ENCODE measurements at regions of chr19 and their contacts with region 1.

Region 1: GRCh38 chr19:53879140-53880081 is 2.6 kb upstream of the PRKCG start:
- DNase-seq: peak; percentile 96

Region 2: DNA sequence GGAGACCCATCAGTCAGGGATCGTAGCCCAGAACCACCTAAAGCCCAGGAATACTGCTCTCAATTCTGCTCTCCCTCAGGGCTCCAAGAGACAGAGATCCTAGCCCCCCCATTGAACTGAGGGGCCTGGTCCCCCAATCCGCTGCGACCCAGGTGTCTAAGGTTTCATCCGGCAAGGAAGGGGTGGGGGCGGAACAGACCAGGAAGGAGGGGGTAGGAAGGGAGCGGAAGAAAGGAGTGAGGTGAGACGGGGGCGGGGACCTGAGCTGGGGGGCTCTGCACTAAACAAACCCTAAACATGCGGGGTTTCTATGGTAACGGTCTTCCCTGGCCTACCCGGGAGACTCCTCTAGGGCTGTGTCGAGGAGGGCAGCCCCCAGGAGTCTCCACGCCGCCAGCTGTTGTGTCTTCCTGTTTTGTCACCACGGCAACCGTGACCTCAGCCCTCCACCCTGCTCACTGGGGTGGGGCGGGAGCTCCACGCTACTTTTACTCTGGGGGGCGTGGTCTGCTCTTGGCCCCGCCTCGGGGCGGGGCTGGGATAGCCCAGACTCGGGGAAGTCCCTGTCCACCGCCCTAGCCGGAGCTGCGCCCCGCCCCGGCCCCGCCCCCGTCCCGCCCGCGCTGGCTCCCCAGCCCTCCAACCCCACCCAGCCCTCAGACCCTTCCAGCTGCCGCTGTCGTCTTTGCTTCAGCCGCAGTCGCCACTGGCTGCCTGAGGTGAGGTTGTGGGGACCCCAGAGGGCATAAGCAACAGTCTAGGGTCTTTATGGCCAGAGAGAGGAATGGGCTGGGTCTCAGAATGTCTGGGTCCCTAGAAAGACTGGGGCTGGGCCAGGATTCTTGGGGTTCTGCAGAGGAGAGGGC is 12.0 kb before region 1 on chr19 and contains the start of gene MYADM:
- CTCF ChIA-PET with region 1: no interaction called
- POLR2A ChIA-PET with region 1: interaction called, 39 read pairs
- DNase-seq: peak; percentile 99

Region 3: DNA sequence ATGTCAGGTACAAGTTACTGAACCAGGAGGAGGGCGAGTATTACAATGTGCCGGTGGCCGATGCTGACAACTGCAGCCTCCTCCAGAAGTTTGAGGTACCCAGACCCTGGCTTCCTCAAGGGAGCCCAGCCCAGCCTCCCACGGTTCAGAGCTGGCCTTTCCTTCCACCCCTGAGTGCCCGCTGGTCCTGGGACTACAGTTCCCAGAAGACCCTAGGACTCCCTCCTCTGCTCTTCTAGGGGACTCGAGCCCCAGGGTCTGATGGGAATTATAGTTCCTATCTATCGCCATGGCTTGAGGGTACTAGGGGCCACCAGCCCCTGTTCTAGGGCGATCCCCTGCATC is 13.5 kb after region 1 on chr19:
- CTCF ChIA-PET with region 1: no interaction called
- POLR2A ChIA-PET with region 1: interaction called, 15 read pairs
- DNase-seq: peak; percentile 62

Region 4: DNA sequence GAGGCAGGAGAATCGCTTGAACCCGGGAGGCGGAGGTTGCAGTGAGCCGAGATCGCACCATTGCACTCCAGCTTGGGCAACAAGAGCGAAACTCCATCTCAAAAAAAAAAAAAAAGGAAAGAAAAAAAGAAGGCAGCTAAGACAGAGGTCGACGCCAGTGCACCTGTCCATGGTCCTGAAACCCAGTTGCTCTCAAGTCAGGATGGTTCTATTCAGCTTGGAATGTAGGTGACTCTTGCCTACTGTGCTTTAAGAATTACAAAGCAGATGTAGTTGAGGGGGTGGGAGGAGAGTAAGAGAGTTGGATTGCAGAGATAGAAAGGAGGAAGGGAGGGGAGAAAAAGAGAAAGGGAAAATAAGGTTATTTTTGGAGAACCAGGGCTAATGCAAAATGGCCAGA is 48.3 kb after region 1 on chr19:
- CTCF ChIA-PET with region 1: no interaction called
- POLR2A ChIA-PET with region 1: no interaction called
- DNase-seq: peak; percentile 50

Region 5: GRCh38 chr19:54041969-54042606 is 162.7 kb after region 1 on chr19:
- CTCF ChIA-PET with region 1: no interaction called
- POLR2A ChIA-PET with region 1: no interaction called
- DNase-seq: no peak

Region 6: GRCh38 chr19:54062643-54063042 is 183.2 kb after region 1 on chr19:
- CTCF ChIA-PET with region 1: no interaction called
- POLR2A ChIA-PET with region 1: no interaction called
- DNase-seq: no peak